Aorta (tissue), 5 donors: ENCODE measurements at regions of chr15 and their contacts with region 1.

Region 1: GRCh38 chr15:33513254-33513653 is 202.5 kb downstream of the RYR3 start:
- DNase-seq: no peak
- ATAC-seq: no peak
- H3K4me3 ChIP-seq: no peak overlapping the region
- H3K27ac ChIP-seq: no peak overlapping the region
- H3K4me1 ChIP-seq: no peaks in the 10 kb centered on the region
- H3K27me3 ChIP-seq: no peaks in the 10 kb centered on the region

Region 2: GRCh38 chr15:33530209-33530608 is 17.0 kb after region 1 on chr15:
- intact Hi-C with region 1: loop called in 1 of 2 experiments (anchors 2 kb)
- DNase-seq: no peak
- ATAC-seq: no peak
- H3K4me3 ChIP-seq: no peak overlapping the region
- H3K27ac ChIP-seq: no peak overlapping the region
- H3K4me1 ChIP-seq: no peaks in the 10 kb centered on the region
- H3K27me3 ChIP-seq: no peaks in the 10 kb centered on the region

Region 3: DNA sequence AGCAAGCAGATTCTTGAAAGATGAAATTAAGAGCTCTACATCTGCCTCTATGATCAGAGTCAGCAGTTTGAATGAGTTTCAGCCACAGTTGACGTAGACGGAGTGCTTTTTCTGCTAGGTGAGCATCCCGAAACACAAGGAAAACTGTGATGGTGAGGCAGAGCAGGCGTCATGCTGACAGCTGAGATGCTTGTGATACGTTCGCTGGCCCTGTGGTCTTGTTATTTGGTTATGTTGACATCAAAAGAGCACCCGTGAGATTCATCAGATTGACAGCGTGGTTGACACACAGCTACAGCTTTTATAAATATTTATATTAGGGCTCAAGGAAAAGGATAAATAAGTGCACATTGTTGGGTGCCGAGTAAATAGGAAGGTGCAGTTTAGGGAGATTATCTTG is 1089.9 kb after region 1 on chr15:
- intact Hi-C with region 1: no loop called
- DNase-seq: no peak
- ATAC-seq: no peak
- H3K4me3 ChIP-seq: no peak overlapping the region
- H3K27ac ChIP-seq: no peak overlapping the region
- H3K4me1 ChIP-seq: no peaks in the 10 kb centered on the region
- H3K27me3 ChIP-seq: no peaks in the 10 kb centered on the region